Breast epithelium (tissue), 4 donors: ENCODE measurements at regions of chr18 and their contacts with region 1.

Region 1: DNA sequence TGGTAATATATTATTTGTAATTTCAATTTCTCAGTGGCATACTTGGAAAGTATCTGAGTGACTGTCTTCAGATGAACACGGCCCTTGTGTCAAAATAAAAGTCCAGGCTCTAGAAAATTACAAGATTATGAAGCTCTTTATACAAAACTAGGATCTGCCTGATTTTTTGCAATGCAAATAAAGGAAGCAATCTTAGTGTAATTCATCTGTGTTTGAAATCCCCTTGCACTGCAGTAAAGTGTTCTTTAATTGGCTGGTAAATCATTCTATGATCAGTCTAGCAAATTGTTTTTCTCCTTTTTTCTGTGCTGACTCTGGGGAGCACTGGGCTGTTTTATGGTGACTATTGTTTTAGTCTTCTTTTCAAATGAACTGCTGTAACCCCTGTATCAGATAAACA is 1039.0 kb downstream of the SOCS6 start:
- DNase-seq: no peak
- H3K4me3 ChIP-seq: no peak overlapping the region
- H3K27ac ChIP-seq: no peak overlapping the region
- H3K4me1 ChIP-seq: peaks cover 0 to 5% of the 10 kb centered on the region in 2 donors
- H3K27me3 ChIP-seq: no peaks in the 10 kb centered on the region
- CTCF ChIP-seq: no peak
- POLR2A ChIP-seq: no peak

Region 2: DNA sequence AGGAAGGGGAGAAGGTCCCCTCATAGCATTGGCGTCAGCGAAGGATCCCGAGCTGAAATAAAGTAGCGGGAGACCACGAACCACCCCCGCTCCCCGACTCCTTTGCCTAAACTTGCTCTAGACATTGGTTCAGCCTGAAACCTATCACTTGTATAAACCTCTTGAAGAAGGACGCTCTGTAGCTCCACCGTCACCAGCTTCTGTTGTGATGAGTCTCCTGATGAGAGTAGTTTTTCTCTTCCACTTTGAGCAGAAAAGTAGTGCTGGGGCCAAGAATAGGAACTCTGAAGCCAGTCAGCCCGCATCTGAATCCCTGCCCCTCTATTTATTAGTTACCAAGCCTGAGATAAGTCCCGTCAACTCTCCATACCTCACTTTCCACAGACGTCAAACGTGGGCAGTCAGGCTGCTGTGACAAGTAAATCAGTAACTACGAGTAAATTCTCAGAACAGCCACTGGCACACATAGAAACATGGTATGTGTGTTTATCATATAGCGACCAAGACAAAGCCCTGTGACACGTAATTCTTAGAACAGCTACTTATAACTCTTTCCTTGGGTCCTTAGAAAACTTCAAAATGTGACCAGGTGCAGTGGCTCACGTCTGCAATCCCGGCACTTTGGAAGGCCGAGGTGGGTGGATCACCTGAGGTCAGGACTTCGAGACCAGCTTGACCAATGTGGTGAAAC is 1441.9 kb before region 1 on chr18:
- intact Hi-C with region 1: no loop called
- DNase-seq: no peak
- H3K4me3 ChIP-seq: no peak overlapping the region
- H3K27ac ChIP-seq: no peak overlapping the region
- H3K4me1 ChIP-seq: no peaks in the 10 kb centered on the region
- H3K27me3 ChIP-seq: no peaks in the 10 kb centered on the region
- CTCF ChIP-seq: no peak
- POLR2A ChIP-seq: no peak

Region 3: DNA sequence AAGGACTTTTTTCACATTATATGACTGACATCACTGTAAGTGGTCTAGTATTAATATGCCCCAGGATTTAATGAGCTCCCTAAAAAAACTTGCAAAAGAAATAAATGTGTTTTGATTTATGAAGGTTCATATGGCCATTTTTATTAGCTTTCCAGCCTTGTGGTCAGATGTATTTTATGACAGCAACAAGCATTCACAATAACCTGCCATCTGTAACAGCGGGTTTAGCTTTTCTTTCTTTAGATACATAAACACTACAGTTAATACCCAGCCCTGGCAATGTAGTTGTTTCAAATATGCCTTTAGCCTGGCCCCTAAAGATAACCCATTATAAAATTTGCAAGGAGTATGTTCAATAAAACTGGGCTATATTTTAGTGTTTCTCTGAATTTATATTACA is 24.8 kb after region 1 on chr18:
- intact Hi-C with region 1: no loop called
- DNase-seq: no peak
- H3K4me3 ChIP-seq: no peak overlapping the region
- H3K27ac ChIP-seq: no peak overlapping the region
- H3K4me1 ChIP-seq: no peaks in the 10 kb centered on the region
- H3K27me3 ChIP-seq: no peaks in the 10 kb centered on the region
- CTCF ChIP-seq: no peak
- POLR2A ChIP-seq: no peak

Region 4: GRCh38 chr18:72808680-72809079 is 1480.8 kb after region 1 on chr18:
- intact Hi-C with region 1: loop called (anchors 10 kb)
- DNase-seq: no peak
- H3K4me3 ChIP-seq: no peak overlapping the region
- H3K27ac ChIP-seq: no peak overlapping the region
- H3K4me1 ChIP-seq: no peaks in the 10 kb centered on the region
- H3K27me3 ChIP-seq: no peaks in the 10 kb centered on the region
- CTCF ChIP-seq: no peak
- POLR2A ChIP-seq: no peak